K562 (cell line): ENCODE measurements at regions of chrX and their contacts with region 1.

Region 1: DNA sequence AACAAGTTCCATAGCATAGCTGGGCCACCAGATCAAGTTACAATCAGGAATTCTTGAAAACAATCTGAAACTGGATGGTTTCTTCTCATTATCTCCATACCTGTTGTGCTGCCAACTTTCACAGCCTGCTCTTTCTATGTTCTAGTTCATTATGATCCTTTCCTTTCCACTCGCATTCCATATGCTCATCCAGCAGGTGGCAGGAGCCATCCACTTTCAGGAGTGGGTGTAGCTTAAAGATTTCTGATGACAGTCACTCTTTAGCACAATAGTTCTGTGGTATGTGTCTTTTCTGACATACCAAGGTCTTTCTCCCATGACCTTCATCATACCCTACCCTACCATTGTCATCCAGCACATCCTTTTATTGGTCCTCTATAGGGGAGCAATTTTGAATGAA is 46.4 kb downstream of the PAGE2 start:
- DNase-seq: peak; percentile 10 to 52 (median 20)
- ATAC-seq: peak; percentile 86
- H3K4me3 ChIP-seq: no peak overlapping the region
- H3K27ac ChIP-seq: no peak overlapping the region
- H3K4me1 ChIP-seq: peaks cover 0 to 3% of the 10 kb centered on the region in 2 experiments; a peak in 1 of 5 replicates
- H3K27me3 ChIP-seq: no peaks in the 10 kb centered on the region
- CTCF ChIP-seq: peak; percentile 50 to 74 (median 67)
- EP300 ChIP-seq: no peak
- POLR2A ChIP-seq: no peak
- RAD21 ChIP-seq: peak; percentile 71 to 83

Region 2: DNA sequence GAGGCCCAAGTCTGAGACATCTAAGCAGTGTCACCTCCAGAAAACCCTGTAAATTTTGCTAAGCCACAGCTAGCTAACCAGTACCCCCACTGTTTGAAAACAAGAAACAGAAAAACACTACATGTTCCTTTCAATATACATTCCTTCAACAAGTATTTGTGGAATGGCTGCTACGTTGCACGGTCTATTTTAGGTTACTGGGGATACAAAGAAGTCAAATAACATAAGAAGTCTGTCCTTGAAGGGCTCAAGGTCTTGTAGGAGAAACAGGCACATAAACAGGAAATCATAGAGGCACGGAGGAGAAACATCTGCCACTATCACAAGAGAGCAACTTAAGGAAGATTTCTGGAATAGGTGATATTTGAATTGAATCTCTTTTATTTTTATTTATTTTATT is 89.5 kb before region 1 on chrX:
- CTCF ChIA-PET with region 1: no interaction called
- POLR2A ChIA-PET with region 1: no interaction called
- in situ Hi-C with region 1: no loop called
- intact Hi-C with region 1: no loop called
- DNase-seq: no peak
- ATAC-seq: no peak
- H3K4me3 ChIP-seq: no peak overlapping the region
- H3K27ac ChIP-seq: no peak overlapping the region
- H3K4me1 ChIP-seq: no peaks in the 10 kb centered on the region
- H3K27me3 ChIP-seq: no peaks in the 10 kb centered on the region
- CTCF ChIP-seq: no peak
- EP300 ChIP-seq: no peak
- POLR2A ChIP-seq: no peak
- RAD21 ChIP-seq: no peak

Region 3: DNA sequence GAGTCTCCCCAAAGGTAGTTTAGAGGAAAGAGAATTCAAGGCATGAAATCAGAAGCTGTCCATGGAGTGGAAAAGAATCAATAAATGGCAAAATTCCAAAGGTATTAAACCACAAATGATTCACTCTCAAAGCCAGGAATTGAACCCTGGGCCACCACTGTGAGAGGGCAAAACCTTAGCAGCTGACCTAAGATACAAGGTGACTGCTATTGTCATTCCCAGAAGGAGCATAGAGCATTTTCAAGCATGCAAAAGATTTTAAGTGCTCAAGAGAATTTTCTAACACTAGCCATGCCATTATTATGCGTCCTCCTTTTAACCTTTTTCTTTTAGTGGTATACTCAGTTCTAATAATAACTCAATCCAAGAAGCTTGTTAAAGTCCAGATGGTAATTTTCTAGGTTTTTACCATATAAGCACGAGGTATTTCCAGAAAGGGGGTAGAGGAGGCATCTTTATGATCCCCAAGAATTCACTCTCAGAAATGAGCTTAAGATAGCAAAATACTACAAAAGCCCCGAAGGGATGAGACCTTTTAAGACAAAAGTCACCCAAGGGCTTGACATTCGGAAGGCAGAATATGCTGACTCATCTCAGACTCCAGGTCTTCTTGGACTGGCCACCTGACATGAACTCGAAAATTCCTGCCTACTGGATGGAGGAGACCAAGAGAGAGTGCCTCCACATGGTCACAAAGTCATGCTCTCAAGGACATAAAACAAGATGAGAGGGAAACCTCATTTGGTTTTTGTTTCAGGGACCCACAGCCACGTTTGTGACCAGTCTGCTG is 71.2 kb after region 1 on chrX:
- CTCF ChIA-PET with region 1: no interaction called
- POLR2A ChIA-PET with region 1: no interaction called
- in situ Hi-C with region 1: no loop called
- intact Hi-C with region 1: loop called (anchors 5 kb)
- DNase-seq: peak in 1 of 4 experiments; percentile 32
- ATAC-seq: no peak; the same call in 2 of the 3 replicates
- H3K4me3 ChIP-seq: no peak overlapping the region
- H3K27ac ChIP-seq: no peak overlapping the region
- H3K4me1 ChIP-seq: no peaks in the 10 kb centered on the region; a peak in 1 of 5 replicates
- H3K27me3 ChIP-seq: no peaks in the 10 kb centered on the region
- CTCF ChIP-seq: no peak
- EP300 ChIP-seq: no peak
- POLR2A ChIP-seq: no peak
- RAD21 ChIP-seq: no peak

Region 4: DNA sequence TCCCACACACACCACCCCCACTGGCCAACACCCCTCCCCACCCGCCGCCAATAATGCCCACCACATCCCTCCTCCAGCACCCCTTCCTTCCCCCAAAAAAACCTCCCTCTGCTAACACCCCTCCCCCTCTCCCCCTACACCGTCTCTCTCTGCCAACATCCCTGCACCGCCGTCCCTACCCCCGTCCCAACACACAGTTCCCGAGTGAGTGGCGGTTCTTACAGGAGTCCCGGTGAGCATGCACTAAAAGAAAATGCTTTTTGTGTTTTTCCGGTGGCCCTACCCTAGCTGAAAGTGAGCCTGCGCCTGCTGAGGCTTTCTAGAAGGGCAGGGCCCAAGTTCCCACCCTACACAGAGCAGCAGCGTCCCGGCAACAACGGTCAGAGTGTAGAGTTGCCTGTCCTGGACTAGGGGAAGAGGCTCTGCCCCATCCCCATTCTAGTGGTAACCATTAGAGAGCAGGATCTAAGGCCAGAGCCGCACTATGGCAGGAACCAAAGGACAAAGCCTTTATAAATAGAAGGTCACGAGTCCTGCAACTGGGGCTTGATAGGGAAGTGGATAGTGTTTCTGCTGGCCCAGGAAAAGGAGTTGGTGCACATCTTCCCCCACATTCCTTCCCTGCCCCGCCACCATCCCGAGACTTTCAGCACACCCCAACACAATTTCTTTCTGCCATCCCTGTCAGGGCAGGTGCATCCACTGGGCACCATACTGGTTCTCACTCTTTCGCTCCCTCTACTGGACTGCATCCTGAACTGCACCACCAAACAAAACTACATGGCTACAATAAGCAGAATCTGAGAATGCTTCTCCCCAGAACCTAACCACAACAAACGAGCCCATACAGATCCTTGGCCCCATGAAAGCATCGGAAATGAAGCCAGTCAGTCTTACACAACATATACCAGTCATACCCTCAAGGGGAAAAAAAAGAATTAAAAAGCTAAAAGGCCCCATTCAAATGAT is 207.6 kb after region 1 on chrX:
- CTCF ChIA-PET with region 1: no interaction called
- POLR2A ChIA-PET with region 1: no interaction called
- in situ Hi-C with region 1: no loop called
- intact Hi-C with region 1: loop called (anchors 10 kb)
- DNase-seq: peak; percentile 34 to 52 (median 40)
- ATAC-seq: peak; percentile 84
- H3K4me3 ChIP-seq: no peak overlapping the region
- H3K27ac ChIP-seq: no peak overlapping the region
- H3K4me1 ChIP-seq: no peaks in the 10 kb centered on the region
- H3K27me3 ChIP-seq: no peaks in the 10 kb centered on the region
- CTCF ChIP-seq: peak; percentile 49 to 68 (median 62)
- EP300 ChIP-seq: no peak
- POLR2A ChIP-seq: no peak
- RAD21 ChIP-seq: peak; percentile 11 to 47; a peak in 2 of 4 replicates

Region 5: DNA sequence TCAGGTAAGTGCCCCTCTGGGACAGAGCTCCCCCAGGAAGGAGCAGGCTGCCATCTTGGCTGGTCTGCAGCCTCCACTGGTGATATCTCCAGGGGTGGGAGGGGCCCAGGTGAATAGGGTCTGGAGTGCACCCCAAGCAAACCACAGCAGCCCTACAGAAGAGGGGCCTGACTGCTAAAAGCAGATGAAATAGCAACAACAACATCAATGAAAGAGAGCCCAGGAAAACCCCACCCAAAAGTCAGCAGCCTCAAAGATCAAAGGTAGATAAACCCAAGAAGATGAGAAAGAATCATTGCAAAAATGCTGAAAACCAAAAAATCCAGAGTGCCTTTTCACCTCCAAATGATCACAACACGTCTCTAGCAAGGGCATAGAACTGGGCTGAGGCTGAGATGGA is 222.1 kb after region 1 on chrX:
- CTCF ChIA-PET with region 1: no interaction called
- POLR2A ChIA-PET with region 1: no interaction called
- in situ Hi-C with region 1: no loop called
- intact Hi-C with region 1: no loop called
- DNase-seq: no peak
- ATAC-seq: no peak
- H3K4me3 ChIP-seq: no peak overlapping the region
- H3K27ac ChIP-seq: no peak overlapping the region
- H3K4me1 ChIP-seq: no peaks in the 10 kb centered on the region
- H3K27me3 ChIP-seq: no peaks in the 10 kb centered on the region; a peak in 1 of 5 replicates
- CTCF ChIP-seq: no peak
- EP300 ChIP-seq: no peak
- POLR2A ChIP-seq: no peak
- RAD21 ChIP-seq: no peak

Region 6: DNA sequence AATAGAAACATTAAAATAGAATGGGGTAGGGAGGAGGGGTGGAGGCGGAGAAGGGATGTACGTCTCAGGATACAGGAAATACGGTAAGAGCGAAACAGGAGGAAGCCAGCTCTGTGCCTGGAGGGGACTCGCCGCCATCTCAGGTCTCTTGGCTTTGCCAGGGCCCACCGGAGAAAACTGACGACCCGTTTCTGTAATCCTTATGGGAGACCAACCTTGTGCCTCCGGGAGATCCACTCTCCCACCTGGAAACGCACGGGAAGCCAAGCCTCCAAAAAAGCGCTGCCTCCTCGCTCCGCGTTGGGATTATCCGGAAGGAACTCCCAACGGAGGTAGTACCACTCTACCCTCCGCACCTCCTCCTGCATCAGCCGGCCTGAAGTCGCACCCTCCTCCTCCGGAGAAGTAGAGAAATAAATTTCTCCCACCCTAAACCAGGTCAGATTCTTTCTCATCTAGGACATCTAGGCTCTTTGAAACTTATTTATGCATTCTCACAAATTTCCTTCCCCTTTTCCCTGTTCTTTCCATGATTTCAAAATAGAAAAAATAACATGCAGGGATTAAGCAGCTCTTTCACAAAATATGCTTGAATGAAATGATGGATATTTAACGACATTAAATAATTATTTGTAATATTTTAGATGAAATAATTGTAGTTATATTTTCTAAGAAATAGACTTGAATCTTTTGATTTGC is 1594.1 kb after region 1 on chrX and contains the start of gene NBDY:
- CTCF ChIA-PET with region 1: no interaction called
- POLR2A ChIA-PET with region 1: no interaction called
- in situ Hi-C with region 1: loop called (anchors 25 kb)
- intact Hi-C with region 1: no loop called
- DNase-seq: peak; percentile 4 to 32 (median 10)
- ATAC-seq: peak; percentile 93
- H3K4me3 ChIP-seq: peak within 1 kb of the TSS; percentile 45
- H3K27ac ChIP-seq: peak within 1 kb of the TSS; percentile 24; the same call in 1 of the 3 replicates
- H3K4me1 ChIP-seq: no peaks in the 10 kb centered on the region
- H3K27me3 ChIP-seq: no peaks in the 10 kb centered on the region
- CTCF ChIP-seq: no peak
- EP300 ChIP-seq: no peak
- POLR2A ChIP-seq: no peak
- RAD21 ChIP-seq: no peak
- polyA plus RNA-seq, gene NBDY: 24.2 to 24.7 TPM